ENCODE measurements at regions of chr6 and their contacts with region 1.

Region 1: GRCh38 chr6:23414051-23414446 is 712.0 kb upstream of the NRSN1 start:
- DNase-seq: peak; percentile 70
- ATAC-seq: peak; percentile 92
- H3K4me3 ChIP-seq: no peak overlapping the region
- H3K27ac ChIP-seq: peak overlapping the region; percentile 54
- H3K4me1 ChIP-seq: peaks cover 18% of the 10 kb centered on the region
- H3K27me3 ChIP-seq: no peaks in the 10 kb centered on the region
- CTCF ChIP-seq: peak; percentile 66

Region 2: DNA sequence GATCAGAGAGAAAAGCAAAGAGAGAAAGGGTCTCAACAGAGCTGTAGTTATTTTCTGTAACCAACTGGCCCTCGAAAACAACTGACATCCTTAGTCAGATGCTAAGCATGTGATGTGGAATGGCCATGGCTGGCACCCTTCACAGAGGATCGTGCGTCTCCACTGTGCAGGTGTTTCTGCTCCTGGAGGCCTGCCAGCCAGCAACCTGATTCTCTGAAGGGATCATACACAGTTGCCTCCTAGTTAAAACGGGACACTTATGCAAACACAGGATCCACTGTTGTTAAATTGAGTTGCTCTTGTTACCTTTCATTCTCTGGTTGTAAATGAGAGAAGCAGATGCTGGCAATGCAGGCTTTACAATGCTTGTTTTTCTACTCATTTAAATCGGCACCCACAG is 696.1 kb before region 1 on chr6:
- CTCF ChIA-PET with region 1: no interaction called
- POLR2A ChIA-PET with region 1: no interaction called
- intact Hi-C with region 1: loop called (anchors 1 kb)
- DNase-seq: peak; percentile 22
- ATAC-seq: no peak
- H3K4me3 ChIP-seq: no peak overlapping the region
- H3K27ac ChIP-seq: no peak overlapping the region
- H3K4me1 ChIP-seq: peaks cover 16% of the 10 kb centered on the region
- H3K27me3 ChIP-seq: no peaks in the 10 kb centered on the region
- CTCF ChIP-seq: no peak

Region 3: DNA sequence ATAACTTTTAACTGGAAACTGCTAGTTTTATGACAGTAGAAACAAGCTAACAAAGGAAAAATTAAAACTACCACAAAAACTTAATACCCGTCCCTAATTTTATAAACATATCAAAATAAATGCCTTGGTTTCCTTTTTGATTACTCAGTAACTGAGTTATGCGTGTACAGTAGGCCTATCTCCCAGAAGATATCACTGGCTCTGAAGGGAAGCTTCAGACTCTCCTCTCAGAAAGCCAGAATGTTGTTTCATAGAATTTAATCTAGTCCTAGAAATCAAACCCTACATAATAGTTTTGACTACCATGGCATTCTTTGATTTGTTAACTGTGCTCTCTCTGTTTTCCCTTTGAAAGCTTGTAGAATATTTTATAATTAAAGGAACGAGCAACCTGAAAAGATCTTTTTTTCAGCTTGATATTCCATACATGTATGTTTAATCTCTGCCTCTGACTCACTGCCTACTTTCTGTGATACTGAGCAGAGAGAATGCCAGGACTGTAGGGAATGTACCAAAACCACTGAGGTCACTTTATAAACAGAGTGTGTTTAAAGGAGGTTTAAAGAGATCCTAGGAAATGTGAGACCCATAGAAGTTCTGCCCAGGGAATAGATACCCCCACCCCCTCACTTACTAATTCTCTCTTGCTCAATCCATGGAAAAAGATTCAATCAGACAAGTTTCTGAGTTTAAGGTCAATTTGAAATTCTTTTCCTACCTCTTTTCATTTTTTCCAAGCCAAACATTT is 533.2 kb before region 1 on chr6:
- CTCF ChIA-PET with region 1: no interaction called
- POLR2A ChIA-PET with region 1: no interaction called
- intact Hi-C with region 1: loop called (anchors 1 kb)
- DNase-seq: peak; percentile 93
- ATAC-seq: peak; percentile 100
- H3K4me3 ChIP-seq: peak overlapping the region; percentile 19; the same call in 1 of the 2 replicates
- H3K27ac ChIP-seq: peak overlapping the region; percentile 82
- H3K4me1 ChIP-seq: peaks cover 19% of the 10 kb centered on the region
- H3K27me3 ChIP-seq: no peaks in the 10 kb centered on the region
- CTCF ChIP-seq: no peak

Region 4: DNA sequence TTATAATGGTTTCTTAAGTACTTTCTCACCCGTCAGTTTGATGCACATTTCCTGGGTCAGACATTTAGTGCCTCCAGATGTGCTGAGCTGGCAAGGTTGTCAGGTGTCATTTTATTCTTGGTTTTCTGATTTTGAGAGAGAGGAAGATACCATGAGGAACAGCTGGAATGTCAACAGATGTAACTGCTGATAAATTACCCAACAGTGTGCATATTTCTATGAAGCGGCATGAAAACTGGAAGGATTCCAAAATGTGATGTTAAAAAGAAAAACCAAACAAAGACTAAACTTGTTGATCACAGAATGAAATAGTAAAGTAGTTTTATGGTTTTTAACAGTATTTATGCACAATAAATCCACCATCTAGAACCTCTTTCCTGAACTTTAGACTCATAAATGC is 397.4 kb before region 1 on chr6:
- CTCF ChIA-PET with region 1: no interaction called
- POLR2A ChIA-PET with region 1: no interaction called
- intact Hi-C with region 1: no loop called
- DNase-seq: no peak
- ATAC-seq: no peak
- H3K4me3 ChIP-seq: no peak overlapping the region
- H3K27ac ChIP-seq: no peak overlapping the region
- H3K4me1 ChIP-seq: no peaks in the 10 kb centered on the region
- H3K27me3 ChIP-seq: no peaks in the 10 kb centered on the region
- CTCF ChIP-seq: no peak

Region 5: GRCh38 chr6:23091795-23092194 is 322.3 kb before region 1 on chr6:
- CTCF ChIA-PET with region 1: no interaction called
- POLR2A ChIA-PET with region 1: no interaction called
- intact Hi-C with region 1: loop called (anchors 10 kb)
- DNase-seq: no peak
- ATAC-seq: no peak
- H3K4me3 ChIP-seq: no peak overlapping the region
- H3K27ac ChIP-seq: no peak overlapping the region
- H3K4me1 ChIP-seq: no peaks in the 10 kb centered on the region
- H3K27me3 ChIP-seq: no peaks in the 10 kb centered on the region
- CTCF ChIP-seq: no peak

Region 6: DNA sequence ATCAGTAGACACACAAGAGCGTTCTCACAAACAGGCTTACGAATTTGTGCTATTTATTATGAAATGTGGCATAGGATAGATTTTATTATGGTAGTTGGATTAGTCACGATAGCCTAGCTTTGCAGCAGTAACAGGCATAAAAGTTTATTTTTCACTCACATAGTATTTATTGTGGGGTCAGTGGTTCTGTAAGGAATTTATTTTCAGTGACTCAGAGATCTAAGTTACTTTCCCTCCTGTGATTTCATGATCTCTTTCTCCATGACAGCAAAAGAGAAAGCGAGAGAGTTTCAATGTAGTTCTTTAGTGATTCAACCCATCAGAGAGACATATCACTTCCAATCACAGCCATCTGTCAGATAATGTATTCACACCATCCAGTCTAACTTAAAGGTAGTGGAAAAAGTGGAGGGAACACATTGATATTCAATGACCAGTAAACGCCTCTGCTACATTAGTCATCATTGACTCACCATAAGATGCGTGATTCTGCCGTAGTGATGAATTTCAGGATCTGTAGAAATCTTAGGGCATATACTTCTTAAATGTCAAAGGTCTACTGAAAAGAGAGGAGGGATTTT is 239.2 kb before region 1 on chr6:
- CTCF ChIA-PET with region 1: no interaction called
- POLR2A ChIA-PET with region 1: no interaction called
- intact Hi-C with region 1: loop called (anchors 1 kb)
- DNase-seq: peak; percentile 95
- ATAC-seq: peak; percentile 86
- H3K4me3 ChIP-seq: peak overlapping the region; percentile 36; the same call in 1 of the 2 replicates
- H3K27ac ChIP-seq: peak overlapping the region; percentile 95
- H3K4me1 ChIP-seq: peaks cover 31% of the 10 kb centered on the region
- H3K27me3 ChIP-seq: no peaks in the 10 kb centered on the region
- CTCF ChIP-seq: no peak

Region 7: GRCh38 chr6:23250556-23250955 is 163.5 kb before region 1 on chr6:
- CTCF ChIA-PET with region 1: interaction called, 10 read pairs
- POLR2A ChIA-PET with region 1: no interaction called
- intact Hi-C with region 1: no loop called
- DNase-seq: no peak
- ATAC-seq: no peak
- H3K4me3 ChIP-seq: no peak overlapping the region
- H3K27ac ChIP-seq: no peak overlapping the region
- H3K4me1 ChIP-seq: no peaks in the 10 kb centered on the region
- H3K27me3 ChIP-seq: no peaks in the 10 kb centered on the region
- CTCF ChIP-seq: no peak